Psoas muscle (tissue), 8 donors: ENCODE measurements at regions of chr19 and their contacts with region 1.

Region 1: DNA sequence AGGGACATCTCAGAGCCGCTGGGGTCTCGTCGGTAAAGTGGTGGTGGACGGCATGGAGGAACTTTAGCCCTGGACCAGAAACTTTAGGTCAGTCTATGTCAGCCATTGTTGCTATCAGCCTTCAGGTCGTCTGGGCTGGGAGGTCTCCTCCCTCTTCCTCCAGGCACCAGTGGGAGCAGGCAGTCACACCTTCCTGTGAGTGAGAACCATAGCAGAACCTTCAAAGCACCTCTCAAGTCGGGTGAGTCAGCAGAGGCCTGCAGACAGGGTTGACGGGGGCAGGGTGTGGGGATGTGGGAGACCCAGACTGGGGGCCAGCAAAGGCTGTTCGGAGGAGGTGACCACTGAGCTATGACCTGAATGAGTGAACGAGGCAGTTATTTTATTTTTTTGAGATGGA is 15.4 kb upstream of the SBNO2 start:
- DNase-seq: no peak
- ATAC-seq: no peak
- H3K4me3 ChIP-seq: no peak overlapping the region
- H3K27ac ChIP-seq: no peak overlapping the region
- H3K4me1 ChIP-seq: no peaks in the 10 kb centered on the region
- H3K27me3 ChIP-seq: no peaks in the 10 kb centered on the region
- CTCF ChIP-seq: no peak

Region 2: DNA sequence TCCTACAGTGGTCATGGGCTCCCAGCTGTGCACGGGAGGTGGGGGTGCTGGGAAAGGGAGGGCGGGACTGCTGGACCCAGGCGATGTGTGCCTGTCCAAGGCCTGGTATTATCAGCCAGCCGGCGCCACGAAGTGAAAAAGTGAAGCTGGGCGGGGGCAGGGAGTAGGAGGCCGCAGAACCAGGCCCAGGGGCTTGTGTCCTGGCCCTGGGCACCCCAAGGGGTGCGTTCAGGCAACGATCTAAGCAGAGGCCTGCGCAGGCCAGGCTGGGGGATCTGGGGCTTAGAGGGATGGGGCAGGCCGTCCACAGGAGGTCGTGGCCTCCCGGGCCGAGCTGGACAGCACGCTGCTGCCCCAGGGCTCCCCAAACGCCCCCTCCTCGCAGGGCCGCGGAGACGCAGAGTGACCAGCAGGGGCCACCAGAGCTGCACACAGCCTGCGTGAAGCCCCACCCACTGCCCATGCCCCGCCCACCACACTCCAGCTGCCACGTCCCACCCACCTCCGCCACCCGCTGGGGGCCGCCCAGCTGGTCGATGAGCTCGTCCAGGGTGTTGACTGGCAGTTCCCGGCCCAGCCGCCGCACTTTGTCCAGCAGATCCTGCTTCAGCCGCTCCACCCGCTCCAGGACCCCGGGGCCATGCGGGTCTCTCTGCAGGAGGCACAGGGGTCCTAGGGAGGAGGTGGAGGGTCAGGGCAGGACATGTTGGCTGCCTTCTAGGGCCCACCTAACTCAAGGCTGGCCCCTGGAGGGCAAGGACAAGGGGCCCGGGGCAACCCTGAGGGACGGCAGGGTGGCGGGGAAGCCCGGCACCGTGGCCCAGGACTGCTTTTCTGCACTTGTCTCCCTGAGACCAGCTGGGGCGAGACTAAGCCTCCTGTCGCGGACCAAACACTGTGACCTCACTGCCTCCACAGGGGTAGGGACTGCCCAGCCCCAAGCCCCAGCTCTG is 76.1 kb before region 1 on chr19:
- intact Hi-C with region 1: loop called (anchors 5 kb)
- DNase-seq: peak; percentile 97 to 99
- ATAC-seq: peak; percentile 86 to 94 (median 90)
- H3K4me3 ChIP-seq: peak overlapping the region; percentile 33
- H3K27ac ChIP-seq: peak overlapping the region; percentile 80
- H3K4me1 ChIP-seq: no peaks in the 10 kb centered on the region
- H3K27me3 ChIP-seq: no peaks in the 10 kb centered on the region
- CTCF ChIP-seq: peak; percentile 93